CD8-positive, alpha-beta T cell (primary cell): ENCODE measurements at regions of chr4 and their contacts with region 1.

Region 1: GRCh38 chr4:37452952-37453280 is 208.4 kb downstream of the NWD2 start:
- DNase-seq: peak in 5 of 9 experiments; percentile 2 to 64 (median 28)
- ATAC-seq: peak; percentile 48
- H3K4me3 ChIP-seq: peak overlapping the region; percentile 38 to 49
- H3K4me3 Mint-ChIP-seq: peak overlapping the region; percentile 82
- H3K27ac ChIP-seq: no peak overlapping the region
- H3K27ac Mint-ChIP-seq: no peak overlapping the region
- H3K4me1 ChIP-seq: peaks cover 6% of the 10 kb centered on the region
- H3K4me1 Mint-ChIP-seq: peaks cover 16% of the 10 kb centered on the region
- H3K27me3 ChIP-seq: no peaks in the 10 kb centered on the region
- H3K27me3 Mint-ChIP-seq: peaks cover 44% of the 10 kb centered on the region
- CTCF ChIP-seq: peak; percentile 32

Region 2: GRCh38 chr4:37568481-37568880 is 115.6 kb after region 1 on chr4:
- CTCF ChIA-PET with region 1: interaction called, 35 read pairs
- POLR2A ChIA-PET with region 1: no interaction called
- intact Hi-C with region 1: loop called in 1 of 2 experiments (anchors 2 kb)
- DNase-seq: no peak
- ATAC-seq: no peak
- H3K4me3 ChIP-seq: no peak overlapping the region
- H3K4me3 Mint-ChIP-seq: no peak overlapping the region
- H3K27ac ChIP-seq: no peak overlapping the region
- H3K27ac Mint-ChIP-seq: no peak overlapping the region
- H3K4me1 ChIP-seq: no peaks in the 10 kb centered on the region
- H3K4me1 Mint-ChIP-seq: no peaks in the 10 kb centered on the region
- H3K27me3 ChIP-seq: no peaks in the 10 kb centered on the region
- H3K27me3 Mint-ChIP-seq: peaks cover 2% of the 10 kb centered on the region
- CTCF ChIP-seq: no peak

Region 3: DNA sequence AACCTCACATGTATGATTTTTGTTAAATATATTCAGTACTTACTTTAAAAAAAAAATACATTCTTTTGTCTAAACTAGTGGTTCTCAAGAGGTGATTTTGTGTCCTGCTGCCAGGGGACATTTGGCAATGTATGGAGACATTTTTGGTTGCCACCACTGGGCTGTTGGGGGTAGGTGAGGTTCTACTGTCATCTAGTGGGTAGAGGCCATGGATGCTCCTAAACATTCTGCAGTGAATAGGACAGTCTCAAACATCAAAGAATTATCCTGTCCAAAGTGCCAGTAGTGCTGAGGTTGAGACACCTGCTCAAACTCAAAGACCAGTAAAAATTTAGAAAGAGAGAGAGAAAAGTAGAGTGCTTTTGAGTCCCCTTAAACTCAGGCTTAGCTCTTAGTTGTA is 340.6 kb after region 1 on chr4:
- CTCF ChIA-PET with region 1: no interaction called
- POLR2A ChIA-PET with region 1: no interaction called
- intact Hi-C with region 1: loop called in 1 of 2 experiments (anchors 2 kb)
- DNase-seq: peak in 4 of 9 experiments; percentile 18 to 61 (median 34)
- ATAC-seq: peak; percentile 66
- H3K4me3 ChIP-seq: no peak overlapping the region
- H3K4me3 Mint-ChIP-seq: no peak overlapping the region
- H3K27ac ChIP-seq: no peak overlapping the region
- H3K27ac Mint-ChIP-seq: no peak overlapping the region
- H3K4me1 ChIP-seq: no peaks in the 10 kb centered on the region
- H3K4me1 Mint-ChIP-seq: no peaks in the 10 kb centered on the region
- H3K27me3 ChIP-seq: no peaks in the 10 kb centered on the region
- H3K27me3 Mint-ChIP-seq: no peaks in the 10 kb centered on the region
- CTCF ChIP-seq: peak; percentile 65

Region 4: GRCh38 chr4:38837849-38838248 is 1384.9 kb after region 1 on chr4:
- CTCF ChIA-PET with region 1: no interaction called
- POLR2A ChIA-PET with region 1: no interaction called
- intact Hi-C with region 1: no loop called
- DNase-seq: peak in 2 of 9 experiments; percentile 40 to 52
- ATAC-seq: peak; percentile 83
- H3K4me3 ChIP-seq: no peak overlapping the region
- H3K4me3 Mint-ChIP-seq: peak overlapping the region; percentile 3
- H3K27ac ChIP-seq: no peak overlapping the region
- H3K27ac Mint-ChIP-seq: peak overlapping the region; percentile 12
- H3K4me1 ChIP-seq: peaks cover 15% of the 10 kb centered on the region
- H3K4me1 Mint-ChIP-seq: peaks cover 16% of the 10 kb centered on the region
- H3K27me3 ChIP-seq: no peaks in the 10 kb centered on the region
- H3K27me3 Mint-ChIP-seq: no peaks in the 10 kb centered on the region
- CTCF ChIP-seq: no peak